Ascending aorta (tissue), 2 donors: ENCODE measurements at regions of chr4 and their contacts with region 1.

Region 1: GRCh38 chr4:1809754-1810511 is 16.8 kb downstream of the FGFR3 start:
- DNase-seq: no peak
- H3K4me3 ChIP-seq: no peak overlapping the region
- H3K27ac ChIP-seq: no peak overlapping the region
- H3K4me1 ChIP-seq: no peaks in the 10 kb centered on the region
- H3K27me3 ChIP-seq: no peaks in the 10 kb centered on the region
- CTCF ChIP-seq: peak; percentile 38 to 69 (median 51)

Region 2: GRCh38 chr4:1763550-1764080 is 46.3 kb before region 1 on chr4:
- intact Hi-C with region 1: loop called (anchors 1 kb)
- DNase-seq: no peak
- H3K4me3 ChIP-seq: peak overlapping the region; percentile 45 to 52
- H3K27ac ChIP-seq: no peak overlapping the region
- H3K4me1 ChIP-seq: peaks cover 0 to 11% of the 10 kb centered on the region in 2 donors
- H3K27me3 ChIP-seq: peaks cover 8% of the 10 kb centered on the region
- CTCF ChIP-seq: peak in 2 of 3 experiments; percentile 19 to 28

Region 3: GRCh38 chr4:1870578-1871443 is 60.9 kb after region 1 on chr4 and contains the start of gene NSD2:
- intact Hi-C with region 1: no loop called
- DNase-seq: peak; percentile 35 to 93
- H3K4me3 ChIP-seq: peak within 1 kb of the TSS; percentile 99 to 100
- H3K27ac ChIP-seq: peak within 1 kb of the TSS; percentile 98 to 99
- H3K4me1 ChIP-seq: peaks cover 4 to 5% of the 10 kb centered on the region in 2 donors
- H3K27me3 ChIP-seq: no peaks in the 10 kb centered on the region
- CTCF ChIP-seq: no peak
- total RNA-seq, gene NSD2: 19.9 TPM